CD8-positive, alpha-beta T cell (primary cell): ENCODE measurements at regions of chr1 and their contacts with region 1.

Region 1: DNA sequence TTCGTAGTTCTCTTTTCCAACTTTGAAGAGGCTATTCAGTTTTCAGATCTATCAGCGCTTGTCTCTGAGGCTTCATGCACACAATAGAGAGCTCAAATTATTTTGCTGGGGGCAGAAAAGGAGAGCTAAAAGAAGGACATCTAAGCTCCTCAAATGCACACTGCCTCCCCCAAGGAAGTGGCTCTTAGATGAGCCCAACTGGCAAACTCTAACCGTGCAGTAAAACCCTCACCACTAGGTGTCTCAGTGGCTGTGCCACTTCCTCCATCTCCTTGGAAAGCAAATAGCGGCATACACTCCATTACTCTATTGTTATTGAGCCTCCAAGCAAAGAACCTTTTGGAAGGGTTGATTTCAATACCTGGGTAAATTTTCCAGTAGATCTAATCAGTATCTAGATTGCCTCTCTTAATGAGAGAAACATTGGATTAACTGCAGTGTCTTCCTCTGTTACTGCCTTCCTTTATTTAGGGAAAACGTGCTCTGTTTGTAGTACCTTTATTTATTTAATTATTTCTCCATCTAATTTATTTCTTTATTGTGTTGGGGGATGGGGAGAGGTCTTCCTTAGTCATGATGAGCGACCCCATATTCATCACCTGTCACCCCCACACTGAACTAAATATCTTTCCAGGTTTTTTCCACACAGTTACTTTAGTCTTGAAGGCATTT is 9.2 kb upstream of the SFPQ start:
- DNase-seq: peak; percentile 50 to 85 (median 72)
- ATAC-seq: peak; percentile 100
- H3K4me3 ChIP-seq: no peak overlapping the region
- H3K4me3 Mint-ChIP-seq: no peak overlapping the region
- H3K27ac ChIP-seq: no peak overlapping the region
- H3K27ac Mint-ChIP-seq: no peak overlapping the region
- H3K4me1 ChIP-seq: peaks cover 3% of the 10 kb centered on the region
- H3K4me1 Mint-ChIP-seq: peaks cover 7% of the 10 kb centered on the region
- H3K27me3 ChIP-seq: peaks cover 0 to 5% of the 10 kb centered on the region in 2 experiments
- H3K27me3 Mint-ChIP-seq: no peaks in the 10 kb centered on the region
- CTCF ChIP-seq: peak; percentile 90

Region 2: GRCh38 chr1:35037206-35037605 is 165.0 kb before region 1 on chr1:
- CTCF ChIA-PET with region 1: no interaction called
- POLR2A ChIA-PET with region 1: no interaction called
- intact Hi-C with region 1: no loop called
- DNase-seq: no peak
- ATAC-seq: no peak
- H3K4me3 ChIP-seq: no peak overlapping the region
- H3K4me3 Mint-ChIP-seq: no peak overlapping the region
- H3K27ac ChIP-seq: no peak overlapping the region
- H3K27ac Mint-ChIP-seq: no peak overlapping the region
- H3K4me1 ChIP-seq: no peaks in the 10 kb centered on the region
- H3K4me1 Mint-ChIP-seq: no peaks in the 10 kb centered on the region
- H3K27me3 ChIP-seq: no peaks in the 10 kb centered on the region
- H3K27me3 Mint-ChIP-seq: peaks cover 8% of the 10 kb centered on the region
- CTCF ChIP-seq: no peak

Region 3: DNA sequence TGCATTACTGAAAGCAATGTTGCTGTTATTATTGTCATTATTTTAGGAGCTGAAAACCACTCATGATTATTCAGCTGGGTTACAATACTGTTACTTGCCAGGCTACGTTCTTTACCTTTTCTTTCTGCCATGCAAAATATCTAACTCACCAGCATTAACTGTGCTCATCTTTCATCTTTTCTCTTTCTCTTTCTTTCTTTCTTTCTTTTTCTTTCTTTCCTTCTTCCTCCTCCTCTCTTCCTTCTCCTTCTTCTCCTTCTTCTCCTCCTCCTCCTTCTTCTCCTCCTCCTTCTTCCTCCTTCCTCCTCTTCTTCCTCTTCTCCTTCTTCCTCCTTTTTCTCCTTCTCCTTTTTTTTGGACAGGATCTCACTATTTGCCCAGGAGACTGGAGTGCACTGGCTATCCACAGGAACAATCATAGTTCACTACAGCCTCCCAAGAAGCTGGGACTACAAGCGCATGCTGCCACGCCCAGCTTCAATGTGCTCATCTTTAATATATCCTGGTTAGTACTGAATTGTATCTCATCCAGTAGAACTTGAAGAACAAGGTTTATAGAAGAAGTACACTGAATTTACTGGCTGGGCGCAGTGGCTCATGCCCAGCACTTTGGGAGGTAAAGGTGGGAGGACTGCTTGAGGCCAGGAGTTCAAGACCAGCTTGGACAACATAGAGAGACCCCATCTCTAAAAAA is 59.4 kb after region 1 on chr1:
- CTCF ChIA-PET with region 1: interaction called, 9 read pairs
- POLR2A ChIA-PET with region 1: interaction called, 10 read pairs
- intact Hi-C with region 1: no loop called
- DNase-seq: no peak
- ATAC-seq: no peak
- H3K4me3 ChIP-seq: no peak overlapping the region
- H3K4me3 Mint-ChIP-seq: no peak overlapping the region
- H3K27ac ChIP-seq: no peak overlapping the region
- H3K27ac Mint-ChIP-seq: no peak overlapping the region
- H3K4me1 ChIP-seq: no peaks in the 10 kb centered on the region
- H3K4me1 Mint-ChIP-seq: no peaks in the 10 kb centered on the region
- H3K27me3 ChIP-seq: peaks cover 0 to 2% of the 10 kb centered on the region in 2 experiments
- H3K27me3 Mint-ChIP-seq: peaks cover 16% of the 10 kb centered on the region
- CTCF ChIP-seq: no peak

Region 4: DNA sequence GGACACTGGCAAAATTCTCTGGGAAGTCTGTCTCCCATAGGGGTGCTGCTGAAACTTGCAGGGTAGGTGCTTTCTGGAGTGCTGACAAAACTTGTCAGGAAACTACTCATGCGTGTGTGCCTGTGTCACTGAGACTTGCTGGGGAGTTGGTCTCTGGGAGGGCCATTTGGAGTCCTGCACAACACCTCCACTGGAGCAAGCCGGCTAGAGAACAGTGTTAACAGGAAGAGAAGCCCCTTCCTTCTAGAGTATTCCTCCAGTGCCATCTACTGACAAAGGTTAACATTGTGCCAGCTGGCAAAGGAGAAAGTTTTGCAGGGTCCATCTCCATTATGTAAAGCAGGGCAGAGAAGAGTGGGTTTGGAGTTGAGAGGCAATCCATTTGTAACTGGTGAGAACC is 96.3 kb after region 1 on chr1:
- CTCF ChIA-PET with region 1: interaction called, 17 read pairs
- POLR2A ChIA-PET with region 1: interaction called, 3 read pairs
- intact Hi-C with region 1: loop called (anchors 1 kb)
- DNase-seq: peak in 7 of 9 experiments; percentile 16 to 72 (median 24)
- ATAC-seq: peak; percentile 96
- H3K4me3 ChIP-seq: no peak overlapping the region
- H3K4me3 Mint-ChIP-seq: no peak overlapping the region
- H3K27ac ChIP-seq: no peak overlapping the region
- H3K27ac Mint-ChIP-seq: peak overlapping the region; percentile 45
- H3K4me1 ChIP-seq: peaks cover 5% of the 10 kb centered on the region
- H3K4me1 Mint-ChIP-seq: peaks cover 14% of the 10 kb centered on the region
- H3K27me3 ChIP-seq: no peaks in the 10 kb centered on the region
- H3K27me3 Mint-ChIP-seq: no peaks in the 10 kb centered on the region
- CTCF ChIP-seq: peak; percentile 59

Region 5: GRCh38 chr1:35443768-35444518 is 241.8 kb after region 1 on chr1:
- CTCF ChIA-PET with region 1: interaction called, 5 read pairs
- POLR2A ChIA-PET with region 1: no interaction called
- intact Hi-C with region 1: loop called in 1 of 2 experiments (anchors 5 kb)
- DNase-seq: peak in 1 of 9 experiments; percentile 19
- ATAC-seq: no peak
- H3K4me3 ChIP-seq: no peak overlapping the region
- H3K4me3 Mint-ChIP-seq: no peak overlapping the region
- H3K27ac ChIP-seq: no peak overlapping the region
- H3K27ac Mint-ChIP-seq: peak overlapping the region; percentile 82
- H3K4me1 ChIP-seq: peaks cover 15% of the 10 kb centered on the region
- H3K4me1 Mint-ChIP-seq: peaks cover 31% of the 10 kb centered on the region
- H3K27me3 ChIP-seq: no peaks in the 10 kb centered on the region
- H3K27me3 Mint-ChIP-seq: no peaks in the 10 kb centered on the region
- CTCF ChIP-seq: no peak

Region 6: GRCh38 chr1:35544978-35545377 is 342.8 kb after region 1 on chr1:
- CTCF ChIA-PET with region 1: interaction called, 3 read pairs
- POLR2A ChIA-PET with region 1: no interaction called
- intact Hi-C with region 1: loop called in 1 of 2 experiments (anchors 1 kb)
- DNase-seq: peak in 7 of 9 experiments; percentile 37 to 83 (median 70)
- ATAC-seq: peak; percentile 88
- H3K4me3 ChIP-seq: no peak overlapping the region
- H3K4me3 Mint-ChIP-seq: no peak overlapping the region
- H3K27ac ChIP-seq: no peak overlapping the region
- H3K27ac Mint-ChIP-seq: peak overlapping the region; percentile 20
- H3K4me1 ChIP-seq: peaks cover 35% of the 10 kb centered on the region
- H3K4me1 Mint-ChIP-seq: peaks cover 77% of the 10 kb centered on the region
- H3K27me3 ChIP-seq: no peaks in the 10 kb centered on the region
- H3K27me3 Mint-ChIP-seq: no peaks in the 10 kb centered on the region
- CTCF ChIP-seq: peak; percentile 57